WTC11 (cell line): ENCODE measurements at regions of chr7 and their contacts with region 1.

Region 1: DNA sequence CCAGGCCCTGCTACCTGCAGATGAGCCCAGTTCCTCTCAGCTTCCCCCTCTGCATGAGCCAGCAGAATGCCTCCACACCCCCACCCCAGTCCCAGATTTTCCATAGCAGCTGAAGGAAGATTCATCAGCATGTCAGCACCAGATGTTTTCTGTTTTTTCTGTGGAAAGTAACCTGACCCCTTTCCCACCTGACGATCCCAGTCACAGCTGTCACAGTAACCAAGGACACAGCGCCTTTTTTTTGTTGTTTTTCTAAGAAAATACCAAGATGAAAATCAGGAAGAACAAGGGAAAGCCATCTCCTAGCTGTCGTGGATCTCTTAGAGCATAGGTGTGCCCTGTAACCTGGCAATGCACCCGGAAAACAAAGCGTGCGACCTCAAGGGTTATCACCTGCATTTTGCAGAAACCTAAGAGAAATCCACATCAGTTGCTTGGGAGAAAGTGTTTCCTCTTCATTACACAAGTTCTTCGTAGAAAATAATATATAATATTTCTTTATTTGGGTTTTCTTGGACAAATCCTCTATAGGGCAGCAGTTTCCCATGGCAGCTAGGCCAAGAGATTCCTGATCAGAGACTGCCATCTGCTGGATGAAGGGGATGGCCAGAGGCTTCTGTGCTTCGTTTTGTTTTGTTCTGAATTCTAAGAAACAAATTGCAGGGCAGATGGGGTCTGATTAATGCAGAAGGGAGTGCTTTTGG is 401.9 kb downstream of the TNS3 start:
- DNase-seq: peak; percentile 59
- ATAC-seq: peak; percentile 88
- H3K4me3 Mint-ChIP-seq: no peak overlapping the region
- H3K27ac Mint-ChIP-seq: no peak overlapping the region
- H3K4me1 Mint-ChIP-seq: peaks cover 6% of the 10 kb centered on the region
- H3K27me3 Mint-ChIP-seq: peaks cover 8% of the 10 kb centered on the region
- CTCF ChIP-seq: peak; percentile 61

Region 2: GRCh38 chr7:47088329-47089067 is 91.5 kb before region 1 on chr7:
- CTCF ChIA-PET with region 1: no interaction called
- POLR2A ChIA-PET with region 1: no interaction called
- DNase-seq: peak; percentile 70
- ATAC-seq: peak; percentile 94
- H3K4me3 Mint-ChIP-seq: no peak overlapping the region
- H3K27ac Mint-ChIP-seq: no peak overlapping the region
- H3K4me1 Mint-ChIP-seq: no peaks in the 10 kb centered on the region
- H3K27me3 Mint-ChIP-seq: peaks cover 11% of the 10 kb centered on the region
- CTCF ChIP-seq: peak; percentile 71

Region 3: DNA sequence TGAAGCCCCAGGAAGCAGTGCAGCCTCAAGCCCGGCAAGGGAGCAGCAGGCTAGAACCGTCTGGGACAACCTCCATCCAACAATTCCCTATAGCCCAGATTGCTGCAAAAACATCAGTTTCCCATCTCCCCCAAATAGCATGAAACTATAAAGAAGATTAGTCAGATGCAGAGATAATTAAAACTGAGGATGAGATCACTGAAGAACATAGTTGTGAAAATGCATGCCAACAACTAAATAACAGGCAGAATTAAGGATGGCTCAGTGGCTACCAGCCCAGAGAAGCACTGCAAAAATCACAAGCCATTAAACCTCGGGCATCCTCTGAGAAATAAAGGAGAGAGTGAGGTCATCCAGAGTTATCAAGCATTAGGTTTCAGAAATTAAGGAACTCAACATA is 25.2 kb before region 1 on chr7:
- CTCF ChIA-PET with region 1: no interaction called
- POLR2A ChIA-PET with region 1: no interaction called
- DNase-seq: no peak
- ATAC-seq: no peak
- H3K4me3 Mint-ChIP-seq: no peak overlapping the region
- H3K27ac Mint-ChIP-seq: no peak overlapping the region
- H3K4me1 Mint-ChIP-seq: peaks cover 25% of the 10 kb centered on the region
- H3K27me3 Mint-ChIP-seq: no peaks in the 10 kb centered on the region
- CTCF ChIP-seq: no peak

Region 4: DNA sequence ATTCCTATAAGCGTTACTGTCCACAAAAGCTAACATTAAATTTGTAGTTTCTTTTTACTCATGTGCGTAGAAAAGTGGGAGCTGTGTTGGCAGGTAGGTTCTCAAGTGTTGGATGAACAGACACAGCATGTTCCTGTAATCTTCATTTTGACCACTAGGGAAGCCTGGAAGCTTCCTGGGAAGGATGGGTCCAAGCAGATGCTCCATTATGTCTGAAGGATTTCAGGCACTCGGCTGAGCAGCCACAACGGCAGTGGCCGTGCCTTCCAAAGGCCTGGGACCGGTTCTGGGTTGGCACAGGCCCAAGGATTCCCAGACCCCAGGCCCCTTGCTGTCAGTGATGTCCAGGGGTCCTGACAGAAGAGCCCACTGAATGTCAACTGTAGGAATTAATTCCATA is 15.7 kb after region 1 on chr7:
- CTCF ChIA-PET with region 1: interaction called, 14 read pairs
- POLR2A ChIA-PET with region 1: no interaction called
- DNase-seq: no peak
- ATAC-seq: peak; percentile 96
- H3K4me3 Mint-ChIP-seq: no peak overlapping the region
- H3K27ac Mint-ChIP-seq: no peak overlapping the region
- H3K4me1 Mint-ChIP-seq: no peaks in the 10 kb centered on the region
- H3K27me3 Mint-ChIP-seq: peaks cover 4% of the 10 kb centered on the region
- CTCF ChIP-seq: peak; percentile 37; the same call in 1 of the 2 replicates

Region 5: GRCh38 chr7:47418601-47419381 is 238.8 kb after region 1 on chr7:
- CTCF ChIA-PET with region 1: no interaction called
- POLR2A ChIA-PET with region 1: no interaction called
- DNase-seq: no peak
- ATAC-seq: no peak
- H3K4me3 Mint-ChIP-seq: no peak overlapping the region
- H3K27ac Mint-ChIP-seq: no peak overlapping the region
- H3K4me1 Mint-ChIP-seq: peaks cover 10% of the 10 kb centered on the region
- H3K27me3 Mint-ChIP-seq: no peaks in the 10 kb centered on the region
- CTCF ChIP-seq: no peak

Region 6: DNA sequence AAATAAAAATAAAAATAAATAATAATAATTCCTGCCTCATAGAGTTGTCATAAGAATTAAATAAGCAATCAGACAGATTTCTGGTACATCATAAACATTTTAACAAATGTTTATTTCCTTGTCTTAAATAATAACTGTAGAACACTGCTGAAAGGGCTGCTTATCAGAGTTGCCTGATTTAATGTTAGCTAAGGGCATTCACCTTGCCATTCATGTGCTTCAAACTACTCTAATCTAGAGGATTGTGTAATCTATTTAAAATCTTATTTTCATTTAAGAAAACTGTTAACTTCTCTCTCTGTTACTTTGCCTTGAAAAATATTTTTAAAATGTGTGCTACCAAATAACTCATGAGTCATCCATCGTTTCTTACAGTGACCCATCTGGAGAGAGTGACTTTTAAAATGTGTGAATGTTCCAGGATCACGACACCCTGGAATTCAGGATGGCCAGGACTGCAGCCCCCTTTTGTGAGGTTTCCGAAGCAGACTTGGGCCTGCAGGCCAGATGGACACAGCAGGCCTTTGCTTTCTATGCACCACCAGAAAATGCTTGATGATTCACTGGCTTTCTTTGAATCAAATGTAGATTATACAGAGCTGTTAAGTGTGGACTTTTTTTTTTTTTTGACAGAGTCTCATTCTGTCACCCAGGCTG is 511.1 kb after region 1 on chr7:
- CTCF ChIA-PET with region 1: no interaction called
- POLR2A ChIA-PET with region 1: no interaction called
- DNase-seq: no peak
- ATAC-seq: no peak
- H3K4me3 Mint-ChIP-seq: no peak overlapping the region
- H3K27ac Mint-ChIP-seq: no peak overlapping the region
- H3K4me1 Mint-ChIP-seq: no peaks in the 10 kb centered on the region
- H3K27me3 Mint-ChIP-seq: no peaks in the 10 kb centered on the region; the same call in 1 of the 2 replicates
- CTCF ChIP-seq: no peak